ENCODE measurements at regions of chr2 and their contacts with region 1.

Region 1: DNA sequence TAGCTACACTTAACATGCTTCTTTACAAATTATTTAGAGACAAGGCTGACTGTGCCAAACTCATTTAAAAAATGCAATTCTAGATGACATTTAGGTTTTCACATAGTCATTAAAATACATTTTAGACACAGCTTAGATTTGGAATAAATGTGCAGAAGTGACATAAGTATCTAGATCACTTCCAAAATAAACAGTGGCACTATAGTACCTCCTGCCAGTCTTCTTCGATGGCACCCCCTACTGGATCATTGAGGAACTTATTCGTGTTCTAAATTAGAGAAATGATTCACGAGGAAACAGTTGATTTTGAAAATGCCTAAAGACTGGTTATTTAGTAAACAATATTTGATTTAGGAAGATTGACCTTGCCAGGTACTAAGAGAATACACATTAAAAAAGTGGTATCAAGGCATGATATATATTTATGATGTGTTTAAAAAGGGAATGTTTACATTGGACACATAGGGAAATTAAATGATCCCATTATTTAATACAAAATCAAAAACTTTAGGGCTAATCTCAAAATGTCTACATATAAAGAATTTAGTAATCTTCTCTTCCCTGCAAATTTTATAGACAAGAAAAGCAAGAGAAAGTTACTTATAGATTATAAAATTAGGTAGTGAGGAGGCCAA is 323.9 kb downstream of the XIRP2 start:
- DNase-seq: no peak

Region 2: DNA sequence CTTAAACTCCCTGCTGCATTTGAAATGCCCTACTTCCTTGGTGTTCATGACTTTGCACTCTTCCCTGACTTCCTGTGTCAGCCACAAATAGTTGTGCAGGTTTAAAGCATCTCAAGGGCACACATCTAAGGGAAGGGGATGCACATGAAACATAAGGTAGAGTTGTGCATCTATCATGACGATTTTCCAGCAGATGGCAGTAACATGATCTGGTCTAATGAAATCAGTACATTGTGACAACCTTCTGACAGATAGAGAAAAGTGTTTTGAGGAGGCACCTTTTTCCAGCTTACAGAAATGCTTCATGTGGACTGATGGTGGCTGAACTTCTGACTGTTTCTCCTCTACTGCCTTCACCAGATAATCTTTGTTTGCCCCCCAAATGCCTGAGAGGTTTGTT is 85.0 kb before region 1 on chr2:
- intact Hi-C with region 1: loop called in 1 of 2 experiments (anchors 5 kb)
- DNase-seq: no peak

Region 3: DNA sequence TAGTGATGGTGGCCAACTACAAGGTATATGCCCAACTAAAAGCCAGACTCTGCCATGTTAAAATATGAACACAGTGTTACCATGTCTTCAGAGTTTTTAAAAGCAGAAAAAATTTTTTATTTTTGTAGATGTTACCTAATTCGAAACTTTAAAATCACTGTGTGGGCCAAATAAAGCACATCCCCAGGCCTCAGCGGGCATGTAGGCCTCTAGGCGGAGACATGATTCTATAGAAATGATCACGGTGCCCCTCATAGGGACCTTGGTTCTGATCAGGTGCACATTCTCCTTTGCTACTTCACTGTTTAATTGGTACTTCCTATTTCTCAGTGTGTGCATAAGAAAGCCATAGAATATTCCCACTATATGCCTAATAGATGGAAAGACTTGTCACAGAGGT is 25.3 kb after region 1 on chr2:
- intact Hi-C with region 1: loop called in 1 of 2 experiments (anchors 1 kb)
- DNase-seq: no peak